IMR-90 (cell line): ENCODE measurements at regions of chr2 and their contacts with region 1.

Region 1: DNA sequence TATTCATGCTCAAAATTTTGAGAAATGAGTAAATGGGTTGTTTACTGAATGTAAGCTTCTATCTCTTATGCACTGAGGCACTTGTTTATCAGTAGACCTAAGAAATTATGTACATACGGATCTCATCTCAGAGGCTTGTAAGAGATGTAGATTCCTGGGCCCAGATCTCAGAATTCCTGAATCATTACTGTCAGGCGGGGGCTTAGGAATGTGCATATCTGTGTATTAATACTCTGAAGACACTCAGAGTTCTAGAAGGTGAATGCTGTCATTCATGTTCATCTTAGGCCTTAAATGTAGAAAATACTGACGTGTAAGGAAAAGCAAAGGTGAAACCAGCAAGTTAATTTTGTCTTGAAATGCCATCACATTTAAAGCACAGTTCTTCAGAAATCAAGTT is 169.6 kb downstream of the FMNL2 start:
- DNase-seq: peak; percentile 76
- ATAC-seq: peak; percentile 84
- H3K4me3 ChIP-seq: no peak overlapping the region
- H3K27ac ChIP-seq: peak overlapping the region; percentile 64
- H3K4me1 ChIP-seq: peaks cover 26% of the 10 kb centered on the region
- H3K27me3 ChIP-seq: no peaks in the 10 kb centered on the region
- CTCF ChIP-seq: no peak
- POLR2A ChIP-seq: no peak
- RAD21 ChIP-seq: no peak

Region 2: GRCh38 chr2:151840216-151841046 is 664.2 kb before region 1 on chr2:
- CTCF ChIA-PET with region 1: no interaction called
- POLR2A ChIA-PET with region 1: no interaction called
- dilution Hi-C with region 1: no loop called
- in situ Hi-C with region 1: no loop called
- intact Hi-C with region 1: no loop called
- DNase-seq: no peak
- ATAC-seq: no peak
- H3K4me3 ChIP-seq: no peak overlapping the region
- H3K27ac ChIP-seq: no peak overlapping the region
- H3K4me1 ChIP-seq: no peaks in the 10 kb centered on the region
- H3K27me3 ChIP-seq: no peaks in the 10 kb centered on the region
- CTCF ChIP-seq: no peak
- POLR2A ChIP-seq: no peak
- RAD21 ChIP-seq: no peak

Region 3: DNA sequence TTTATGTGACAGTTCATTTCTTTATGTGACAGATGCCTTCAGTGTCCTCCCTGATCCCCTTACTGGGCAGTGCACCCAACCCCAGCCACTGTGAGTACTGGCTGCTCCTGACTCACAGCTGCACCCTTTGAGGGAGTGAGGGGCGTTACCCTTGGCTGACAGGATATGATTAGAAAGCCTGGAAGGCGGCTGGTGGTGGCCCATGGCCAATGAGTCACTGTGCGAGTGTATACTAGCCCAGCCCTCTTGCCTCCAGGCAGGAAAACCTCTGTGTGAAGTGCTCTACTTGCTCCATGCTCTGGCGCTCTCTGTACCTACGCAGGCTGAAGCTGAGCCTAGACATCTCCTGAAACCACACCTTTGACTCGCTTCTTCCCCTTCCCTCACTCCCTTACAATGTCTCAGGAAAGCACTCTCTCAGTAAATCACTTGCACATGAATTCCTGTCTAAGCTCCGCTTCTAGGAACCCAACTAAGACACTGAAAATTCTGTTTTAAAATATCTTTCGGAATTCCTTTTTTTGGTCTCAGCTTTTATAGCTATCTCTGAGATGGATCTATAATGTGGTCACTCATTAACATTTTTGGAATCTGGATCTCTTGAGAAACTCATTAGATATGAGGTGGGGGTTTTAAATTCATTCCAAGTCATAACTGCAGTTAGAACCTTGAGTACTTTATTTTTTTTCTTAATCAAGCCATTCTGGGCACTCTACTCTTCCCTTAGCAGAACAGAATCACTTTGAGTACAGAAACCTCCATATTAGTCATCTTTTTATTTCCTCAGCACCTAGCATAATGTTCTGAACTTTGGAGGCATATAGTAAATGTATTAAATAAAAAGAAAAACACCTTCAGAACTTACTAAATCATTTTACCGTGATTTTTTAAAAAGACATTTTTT is 303.8 kb before region 1 on chr2:
- CTCF ChIA-PET with region 1: no interaction called
- POLR2A ChIA-PET with region 1: no interaction called
- dilution Hi-C with region 1: no loop called
- in situ Hi-C with region 1: no loop called
- intact Hi-C with region 1: loop called (anchors 1 kb)
- DNase-seq: peak; percentile 98
- ATAC-seq: peak; percentile 100
- H3K4me3 ChIP-seq: no peak overlapping the region; the same call in 1 of the 2 replicates
- H3K27ac ChIP-seq: peak overlapping the region; percentile 72
- H3K4me1 ChIP-seq: no peaks in the 10 kb centered on the region
- H3K27me3 ChIP-seq: no peaks in the 10 kb centered on the region
- CTCF ChIP-seq: no peak
- POLR2A ChIP-seq: peak; percentile 37; the same call in 1 of the 2 replicates
- RAD21 ChIP-seq: peak; percentile 22